GM10248 (cell line): ENCODE measurements at regions of chr4 and their contacts with region 1.

Region 1: GRCh38 chr4:84529169-84529751 is 30.2 kb upstream of the NKX6-1 start:
- DNase-seq: peak; percentile 22
- CTCF ChIP-seq: peak; percentile 48

Region 2: GRCh38 chr4:84235126-84235944 is 293.9 kb before region 1 on chr4:
- CTCF ChIA-PET with region 1: no interaction called
- POLR2A ChIA-PET with region 1: no interaction called
- DNase-seq: peak; percentile 18
- CTCF ChIP-seq: no peak

Region 3: GRCh38 chr4:84511703-84512102 is 17.6 kb before region 1 on chr4:
- CTCF ChIA-PET with region 1: interaction called, 13 read pairs
- POLR2A ChIA-PET with region 1: no interaction called
- DNase-seq: no peak
- CTCF ChIP-seq: no peak